ENCODE measurements at regions of chr18 and their contacts with region 1.

Region 1: GRCh38 chr18:45212181-45213039 is 402.9 kb upstream of the SLC14A2 start:
- DNase-seq: peak; percentile 85
- ATAC-seq: peak; percentile 94 to 96

Region 2: GRCh38 chr18:44679056-44679905 is 533.1 kb before region 1 on chr18:
- intact Hi-C with region 1: loop called in 1 of 2 experiments (anchors 5 kb)
- DNase-seq: peak; percentile 91
- ATAC-seq: peak; percentile 97

Region 3: DNA sequence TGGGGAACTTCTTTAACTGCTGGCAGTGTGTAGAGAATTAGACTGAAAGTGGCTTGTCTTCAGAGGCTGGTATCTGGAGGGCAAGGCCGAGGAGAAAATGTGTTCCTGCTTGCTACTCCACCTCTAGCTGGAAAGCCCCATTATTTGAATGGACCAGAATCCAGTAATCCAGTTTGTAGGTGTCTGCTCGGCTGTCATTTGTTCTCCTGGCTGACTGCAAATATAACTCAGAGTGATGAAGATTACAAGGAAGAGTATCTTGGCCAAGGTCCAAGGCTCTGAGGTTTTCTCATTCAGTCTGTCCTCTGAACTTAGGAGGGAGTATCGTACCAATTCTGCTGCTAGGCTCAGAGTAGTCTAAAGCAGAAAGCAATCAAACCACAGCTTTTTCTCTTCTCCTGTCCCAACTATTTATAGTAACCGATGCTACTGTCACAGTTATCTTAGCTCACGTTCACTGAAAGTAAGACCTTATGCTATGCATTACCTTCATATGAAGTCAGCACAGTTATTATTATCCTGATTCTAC is 303.2 kb before region 1 on chr18:
- intact Hi-C with region 1: loop called in 1 of 2 experiments (anchors 10 kb)
- DNase-seq: no peak
- ATAC-seq: no peak

Region 4: DNA sequence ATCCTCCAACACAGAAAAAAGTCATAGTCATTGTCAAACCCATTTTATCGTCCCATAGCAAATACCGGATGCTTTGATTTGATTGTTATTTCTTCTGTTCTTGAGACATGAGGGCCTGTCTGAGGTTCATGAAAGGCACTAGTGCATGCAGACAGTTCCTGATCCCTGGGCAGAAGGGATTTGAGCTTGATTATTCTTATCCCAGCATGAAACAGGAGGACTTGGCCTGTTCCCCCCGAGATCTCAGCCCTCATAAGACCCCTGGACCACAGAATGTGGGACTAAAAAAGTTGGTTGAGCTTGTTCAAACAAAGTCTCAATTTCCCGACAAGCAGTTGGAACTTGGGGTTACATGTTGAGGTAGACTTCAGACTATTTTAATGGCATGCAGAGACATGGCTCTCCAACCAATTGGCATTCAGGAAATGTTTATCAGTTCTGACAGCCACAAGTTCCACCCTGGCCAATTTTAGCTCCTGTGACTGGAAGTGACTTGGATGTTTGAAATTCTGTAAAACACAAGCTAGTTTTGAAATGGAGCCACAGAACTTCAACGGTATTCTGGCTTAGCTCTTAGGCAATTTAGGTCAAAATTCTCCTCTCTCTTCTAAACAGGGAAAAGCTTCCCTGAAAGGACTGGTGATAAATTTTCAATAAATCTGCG is 36.0 kb after region 1 on chr18:
- intact Hi-C with region 1: no loop called
- DNase-seq: peak; percentile 58
- ATAC-seq: peak; percentile 83 to 91